ENCODE measurements at regions of chr5 and their contacts with region 1.

Region 1: GRCh38 chr5:177403792-177404640 is 3.6 kb upstream of the PFN3 start:
- DNase-seq: peak; percentile 74 to 86 (median 84)
- ATAC-seq: peak; percentile 87
- H3K4me3 ChIP-seq: peak overlapping the region; percentile 61
- H3K4me3 Mint-ChIP-seq: peak overlapping the region in 9 of 10 donors; percentile 76 to 88 (median 84)
- H3K27ac ChIP-seq: peak overlapping the region; percentile 41
- H3K27ac Mint-ChIP-seq: peak overlapping the region in 1 of 9 donors; percentile 19
- H3K4me1 ChIP-seq: peaks cover 25 to 33% of the 10 kb centered on the region in 2 donors
- H3K4me1 Mint-ChIP-seq: peaks cover 7 to 35% (median 23%) of the 10 kb centered on the region in 7 donors
- H3K27me3 ChIP-seq: no peaks in the 10 kb centered on the region
- H3K27me3 Mint-ChIP-seq: peaks cover 0 to 54% (median 0%) of the 10 kb centered on the region in 5 donors

Region 2: GRCh38 chr5:177133091-177133852 is 270.7 kb before region 1 on chr5 and contains the start of gene NSD1:
- CTCF ChIA-PET with region 1: no interaction called
- POLR2A ChIA-PET with region 1: no interaction called
- intact Hi-C with region 1: loop called in 1 of 2 experiments (anchors 1 kb)
- DNase-seq: peak; percentile 86 to 94 (median 93)
- ATAC-seq: peak; percentile 89
- H3K4me3 ChIP-seq: peak within 1 kb of the TSS; percentile 61
- H3K4me3 Mint-ChIP-seq: peak within 1 kb of the TSS; percentile 60 to 88 (median 85)
- H3K27ac ChIP-seq: peak within 1 kb of the TSS; percentile 80
- H3K27ac Mint-ChIP-seq: peak within 1 kb of the TSS; percentile 48 to 95 (median 89)
- H3K4me1 ChIP-seq: peaks cover 47 to 57% of the 10 kb centered on the region in 2 donors
- H3K4me1 Mint-ChIP-seq: peaks cover 34 to 72% (median 65%) of the 10 kb centered on the region in 7 donors
- H3K27me3 ChIP-seq: no peaks in the 10 kb centered on the region
- H3K27me3 Mint-ChIP-seq: no peaks in the 10 kb centered on the region
- total RNA-seq, gene NSD1: 105 to 126 (median 117) TPM

Region 3: DNA sequence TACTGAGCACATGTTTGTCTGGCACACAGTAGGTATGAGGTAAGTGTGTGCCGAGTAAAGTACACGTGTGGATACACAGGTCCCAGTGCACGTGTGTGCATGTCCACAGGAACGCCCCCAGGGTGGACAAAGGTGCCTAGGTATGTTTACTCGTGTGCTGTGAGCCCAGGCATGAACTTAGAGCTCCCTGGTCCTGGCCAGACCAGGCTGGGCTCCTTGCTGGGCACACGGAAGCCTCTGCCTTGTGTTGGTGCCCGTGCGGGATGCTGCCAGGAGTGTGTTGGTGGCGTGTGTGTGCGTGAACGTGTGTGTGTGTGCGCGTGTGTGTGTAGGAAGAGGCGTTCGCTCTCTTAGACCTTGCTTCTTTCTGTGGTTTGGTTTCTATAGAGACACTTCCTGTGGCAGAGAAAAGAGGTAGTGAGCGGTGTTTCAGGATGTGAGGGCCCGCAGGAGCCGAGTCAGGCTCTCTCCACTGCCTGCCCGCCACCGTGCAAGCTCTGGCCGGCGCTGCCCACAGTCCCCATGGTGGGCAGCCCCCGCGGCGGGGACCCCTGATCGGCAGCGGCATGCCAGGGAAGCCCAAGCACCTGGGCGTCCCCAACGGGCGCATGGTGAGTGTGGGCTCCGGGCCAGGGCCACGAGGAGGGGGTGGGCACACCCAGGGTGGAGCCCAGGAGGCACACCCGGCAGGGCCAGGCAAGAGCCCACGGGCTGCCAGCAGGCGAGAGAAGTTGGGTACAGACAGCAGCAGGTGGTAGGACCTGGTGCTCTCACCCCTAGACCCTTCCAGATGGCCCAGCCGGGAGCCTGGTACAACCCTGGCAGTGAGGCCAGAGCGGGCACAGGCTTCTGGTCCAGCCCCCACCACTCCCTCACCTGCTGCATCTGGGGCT is 46.3 kb before region 1 on chr5 and contains the start of gene RGS14:
- CTCF ChIA-PET with region 1: interaction called, 3 read pairs
- POLR2A ChIA-PET with region 1: interaction called, 4 read pairs
- intact Hi-C with region 1: loop called in 1 of 2 experiments (anchors 1 kb)
- DNase-seq: peak; percentile 50 to 90 (median 87)
- ATAC-seq: peak; percentile 95
- H3K4me3 ChIP-seq: peak within 1 kb of the TSS; percentile 70
- H3K4me3 Mint-ChIP-seq: peak within 1 kb of the TSS; percentile 83 to 97 (median 92)
- H3K27ac ChIP-seq: peak within 1 kb of the TSS; percentile 87
- H3K27ac Mint-ChIP-seq: peak within 1 kb of the TSS; percentile 80 to 98 (median 94)
- H3K4me1 ChIP-seq: peaks cover 47 to 56% of the 10 kb centered on the region in 2 donors
- H3K4me1 Mint-ChIP-seq: peaks cover 64 to 86% (median 74%) of the 10 kb centered on the region in 7 donors
- H3K27me3 ChIP-seq: no peaks in the 10 kb centered on the region
- H3K27me3 Mint-ChIP-seq: no peaks in the 10 kb centered on the region
- total RNA-seq, gene RGS14: 68.4 to 196 (median 112) TPM

Region 4: GRCh38 chr5:177382423-177383029 is 21.5 kb before region 1 on chr5:
- CTCF ChIA-PET with region 1: interaction called, 11 read pairs
- POLR2A ChIA-PET with region 1: interaction called, 9 read pairs
- intact Hi-C with region 1: no loop called
- DNase-seq: peak in 7 of 9 donors; percentile 48 to 72 (median 60)
- ATAC-seq: peak; percentile 66
- H3K4me3 ChIP-seq: no peak overlapping the region
- H3K4me3 Mint-ChIP-seq: peak overlapping the region in 8 of 10 donors; percentile 5 to 76 (median 42)
- H3K27ac ChIP-seq: no peak overlapping the region
- H3K27ac Mint-ChIP-seq: peak overlapping the region in 7 of 9 donors; percentile 23 to 86 (median 66)
- H3K4me1 ChIP-seq: peaks cover 6 to 14% of the 10 kb centered on the region in 2 donors
- H3K4me1 Mint-ChIP-seq: peaks cover 24 to 54% (median 37%) of the 10 kb centered on the region in 7 donors
- H3K27me3 ChIP-seq: no peaks in the 10 kb centered on the region
- H3K27me3 Mint-ChIP-seq: peaks cover 0 to 4% (median 0%) of the 10 kb centered on the region in 5 donors

Region 5: GRCh38 chr5:177440211-177440971 is 36.4 kb after region 1 on chr5:
- CTCF ChIA-PET with region 1: interaction called, 105 read pairs
- POLR2A ChIA-PET with region 1: interaction called, 156 read pairs
- intact Hi-C with region 1: no loop called
- DNase-seq: peak in 2 of 9 donors; percentile 16 to 75
- ATAC-seq: peak; percentile 78
- H3K4me3 ChIP-seq: no peak overlapping the region
- H3K4me3 Mint-ChIP-seq: peak overlapping the region in 6 of 10 donors; percentile 0 to 59 (median 46)
- H3K27ac ChIP-seq: peak overlapping the region; percentile 84
- H3K27ac Mint-ChIP-seq: peak overlapping the region in 8 of 9 donors; percentile 63 to 92 (median 84)
- H3K4me1 ChIP-seq: peaks cover 4 to 51% of the 10 kb centered on the region in 2 donors
- H3K4me1 Mint-ChIP-seq: peaks cover 49 to 78% (median 55%) of the 10 kb centered on the region in 7 donors
- H3K27me3 ChIP-seq: no peaks in the 10 kb centered on the region
- H3K27me3 Mint-ChIP-seq: no peaks in the 10 kb centered on the region

Region 6: GRCh38 chr5:177497292-177498033 is 93.4 kb after region 1 on chr5 and contains the start of gene PDLIM7:
- CTCF ChIA-PET with region 1: interaction called, 11 read pairs
- POLR2A ChIA-PET with region 1: interaction called, 4 read pairs
- intact Hi-C with region 1: loop called (anchors 1 kb)
- DNase-seq: peak; percentile 88 to 97 (median 92)
- ATAC-seq: peak; percentile 92
- H3K4me3 ChIP-seq: peak within 1 kb of the TSS; percentile 77
- H3K4me3 Mint-ChIP-seq: peak within 1 kb of the TSS; percentile 77 to 90 (median 84)
- H3K27ac ChIP-seq: peak within 1 kb of the TSS; percentile 61
- H3K27ac Mint-ChIP-seq: peak within 1 kb of the TSS; percentile 28 to 77 (median 66)
- H3K4me1 ChIP-seq: peaks cover 7 to 10% of the 10 kb centered on the region in 2 donors
- H3K4me1 Mint-ChIP-seq: peaks cover 24 to 44% (median 28%) of the 10 kb centered on the region in 7 donors
- H3K27me3 ChIP-seq: no peaks in the 10 kb centered on the region
- H3K27me3 Mint-ChIP-seq: peaks cover 0 to 24% (median 0%) of the 10 kb centered on the region in 5 donors
- total RNA-seq, gene PDLIM7: 4.1 to 63.2 (median 11.9) TPM